Activated B cell treated with CpG ODN at 0.5 μM for 24 hours (primary cell): ENCODE measurements at regions of chr12 and their contacts with region 1.

Region 1: GRCh38 chr12:79674629-79675028 is 16.1 kb downstream of the PAWR start:
- DNase-seq: no peak
- ATAC-seq: peak; percentile 41
- H3K4me3 Mint-ChIP-seq: no peak overlapping the region
- H3K27ac Mint-ChIP-seq: peak overlapping the region; percentile 54
- H3K4me1 Mint-ChIP-seq: peaks cover 53% of the 10 kb centered on the region
- H3K27me3 Mint-ChIP-seq: no peaks in the 10 kb centered on the region
- CTCF ChIP-seq: no peak

Region 2: GRCh38 chr12:79662046-79662811 is 12.4 kb before region 1 on chr12:
- CTCF ChIA-PET with region 1: interaction called, 4 read pairs
- POLR2A ChIA-PET with region 1: no interaction called
- intact Hi-C with region 1: loop called (anchors 1 kb)
- DNase-seq: no peak
- ATAC-seq: no peak
- H3K4me3 Mint-ChIP-seq: no peak overlapping the region
- H3K27ac Mint-ChIP-seq: no peak overlapping the region
- H3K4me1 Mint-ChIP-seq: peaks cover 31% of the 10 kb centered on the region
- H3K27me3 Mint-ChIP-seq: no peaks in the 10 kb centered on the region
- CTCF ChIP-seq: no peak